ENCODE measurements at regions of chr7 and their contacts with region 1.

Region 1: DNA sequence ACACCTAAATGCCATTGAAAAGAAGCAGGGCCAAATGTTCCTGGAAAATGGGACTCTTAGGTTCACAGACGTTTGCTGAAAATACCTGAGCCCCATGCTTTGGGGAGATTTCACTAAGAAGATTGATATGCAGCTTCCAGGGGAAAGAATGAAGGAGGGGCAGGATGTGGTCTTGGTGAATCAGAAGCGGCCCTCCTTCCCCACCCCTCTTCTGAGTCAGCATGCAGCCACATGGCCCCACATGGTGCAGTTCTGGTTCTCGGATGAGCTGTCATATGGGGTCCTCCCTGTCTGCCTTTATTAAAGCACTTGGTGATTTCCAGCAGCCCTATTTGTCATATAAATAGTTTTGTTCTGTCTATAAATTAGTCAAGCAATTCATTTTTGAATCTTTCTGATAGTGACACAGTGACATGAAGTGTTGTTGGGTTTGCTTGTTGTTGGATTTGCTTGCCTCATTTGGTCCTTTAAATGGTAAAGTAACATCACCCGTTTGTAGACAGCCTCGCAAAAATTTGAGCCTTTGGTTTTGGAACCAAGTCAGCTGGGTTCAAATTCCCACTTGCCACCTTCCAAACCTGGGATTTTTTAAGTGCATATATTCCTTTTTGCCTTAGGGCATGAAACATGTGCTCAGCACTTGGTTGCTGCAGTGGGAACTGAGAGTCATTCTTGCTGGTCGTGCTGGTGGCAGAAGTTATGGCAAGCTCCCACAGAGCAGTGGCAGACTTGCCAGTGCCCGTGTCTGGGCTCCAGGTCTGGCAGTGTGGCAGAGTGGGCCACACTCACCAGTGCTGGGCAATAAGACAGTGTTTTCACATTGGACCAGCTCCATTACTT is 68.1 kb upstream of the CDK6 start:
- DNase-seq: peak; percentile 93
- H3K4me3 Mint-ChIP-seq: peak overlapping the region; percentile 53
- H3K27ac Mint-ChIP-seq: peak overlapping the region; percentile 94
- H3K4me1 Mint-ChIP-seq: peaks cover 21% of the 10 kb centered on the region
- H3K27me3 Mint-ChIP-seq: no peaks in the 10 kb centered on the region

Region 2: DNA sequence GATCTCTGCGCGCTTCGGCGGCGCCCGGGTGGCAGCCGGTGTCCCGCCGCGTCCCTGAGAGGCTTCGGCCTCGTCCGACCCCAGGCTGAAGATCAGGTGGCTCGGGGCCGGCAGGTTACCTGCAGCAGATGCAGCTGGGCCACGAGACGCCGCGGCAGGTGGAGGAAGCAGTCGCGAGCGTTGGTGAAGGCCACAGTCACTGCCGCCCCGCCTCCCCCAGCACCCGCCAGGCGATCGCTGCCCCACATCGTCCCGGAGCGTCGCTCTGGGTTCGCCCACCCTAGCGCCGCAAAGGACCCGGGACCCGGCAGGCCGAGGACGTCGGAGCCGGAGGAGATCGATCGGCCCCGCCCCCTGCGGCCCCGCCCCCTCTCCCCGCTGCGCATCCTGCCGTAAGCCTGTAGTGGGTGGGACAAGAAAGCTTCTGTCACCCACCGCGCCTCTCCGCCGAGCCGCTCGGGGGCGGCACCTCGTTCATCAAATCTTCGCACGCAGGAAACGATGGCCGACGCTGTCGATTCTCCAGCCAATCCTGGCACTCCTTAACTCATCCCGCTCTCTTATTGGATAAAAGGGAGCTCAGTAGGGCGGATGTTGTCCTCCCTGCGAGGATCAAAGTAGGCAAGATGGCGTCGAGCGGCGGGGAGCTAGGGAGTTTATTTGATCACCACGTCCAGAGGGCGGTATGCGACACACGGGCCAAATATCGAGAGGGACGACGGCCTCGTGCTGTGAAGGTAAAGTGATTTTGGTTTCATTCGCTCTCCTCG is 376.1 kb before region 1 on chr7 and contains the starts of genes PEX1 and RBM48:
- intact Hi-C with region 1: loop called (anchors 5 kb)
- DNase-seq: peak; percentile 98
- H3K4me3 Mint-ChIP-seq: peak within 1 kb of the TSS; percentile 98
- H3K27ac Mint-ChIP-seq: peak within 1 kb of the TSS; percentile 98
- H3K4me1 Mint-ChIP-seq: peaks cover 22% of the 10 kb centered on the region
- H3K27me3 Mint-ChIP-seq: peaks cover 2% of the 10 kb centered on the region
- total RNA-seq, gene PEX1: 14.4 and 14.8 TPM in 2 replicates
- total RNA-seq, gene RBM48: 14.4 and 17.3 TPM in 2 replicates

Region 3: DNA sequence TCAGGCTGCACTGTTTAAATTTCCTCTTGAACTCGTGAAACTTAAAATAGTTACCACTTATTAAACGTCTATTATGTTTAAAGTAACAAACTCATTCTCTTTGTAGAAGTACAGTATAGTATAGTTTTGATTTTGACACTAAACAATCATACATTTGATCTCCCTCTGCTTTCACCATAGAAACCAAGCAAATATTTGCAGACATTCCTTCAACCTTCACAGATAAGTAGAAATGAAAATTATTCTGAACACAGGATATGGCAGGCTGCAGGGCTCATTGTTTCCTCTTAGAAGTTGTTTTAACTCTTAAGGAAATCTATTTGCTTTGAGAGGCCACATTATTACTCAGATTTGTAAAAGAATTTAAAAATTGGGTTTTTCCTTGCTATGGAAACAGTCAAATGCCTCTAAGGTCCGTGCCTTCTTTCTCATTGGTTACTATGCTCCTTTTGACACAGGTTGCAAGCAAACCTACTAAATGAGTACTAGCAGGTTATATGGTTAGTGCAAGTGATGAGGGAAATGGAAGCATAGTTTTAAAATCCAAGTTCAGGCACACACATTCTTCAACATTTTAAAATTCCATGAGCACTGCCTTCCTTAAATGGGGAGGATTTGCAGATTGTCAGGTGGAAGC is 221.5 kb before region 1 on chr7:
- intact Hi-C with region 1: loop called (anchors 1 kb)
- DNase-seq: peak; percentile 75
- H3K4me3 Mint-ChIP-seq: peak overlapping the region; percentile 47
- H3K27ac Mint-ChIP-seq: peak overlapping the region; percentile 96
- H3K4me1 Mint-ChIP-seq: peaks cover 79% of the 10 kb centered on the region
- H3K27me3 Mint-ChIP-seq: no peaks in the 10 kb centered on the region

Region 4: DNA sequence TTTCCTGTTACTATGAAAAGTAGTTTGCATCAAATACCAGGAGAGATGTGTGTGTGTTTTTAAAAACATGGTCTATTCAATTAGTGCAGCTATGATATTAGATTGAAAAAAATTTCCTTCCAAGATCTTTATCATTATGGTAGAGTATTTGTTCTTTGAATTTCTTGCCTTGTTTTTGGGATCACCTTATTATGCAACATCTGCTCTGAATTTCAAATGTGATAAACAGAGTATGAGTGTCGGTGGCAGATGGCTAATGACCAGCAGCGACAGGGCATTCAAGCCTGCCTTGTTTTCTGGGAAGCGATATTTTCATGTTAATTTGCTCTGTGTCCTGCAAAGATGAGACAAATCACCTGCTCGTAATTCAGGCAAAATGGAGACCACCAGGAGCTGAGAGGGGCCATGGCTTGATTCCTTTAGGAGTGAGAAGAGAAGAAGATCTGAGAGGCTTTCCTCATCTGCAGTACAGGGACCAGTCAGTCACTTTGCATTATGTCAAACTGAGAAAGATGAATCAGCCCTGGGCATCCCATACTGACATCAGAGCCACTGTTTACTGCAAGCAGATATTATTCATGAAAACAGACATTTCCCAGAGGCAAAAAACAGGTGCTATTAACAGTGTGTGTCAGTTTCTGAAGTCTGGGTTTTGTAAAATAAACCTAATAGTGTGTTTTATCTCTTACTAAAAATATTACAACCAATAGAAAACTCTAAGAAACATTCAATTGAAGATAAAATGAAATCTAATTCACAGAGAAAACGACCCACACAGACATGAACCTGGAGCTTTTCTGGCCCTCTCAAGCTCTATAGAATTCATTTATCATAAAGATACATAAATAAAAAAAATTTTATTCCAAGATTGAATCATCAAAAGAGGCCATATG is 135.8 kb before region 1 on chr7:
- intact Hi-C with region 1: loop called (anchors 5 kb)
- DNase-seq: peak; percentile 66
- H3K4me3 Mint-ChIP-seq: peak overlapping the region; percentile 63
- H3K27ac Mint-ChIP-seq: peak overlapping the region; percentile 94
- H3K4me1 Mint-ChIP-seq: peaks cover 59% of the 10 kb centered on the region
- H3K27me3 Mint-ChIP-seq: no peaks in the 10 kb centered on the region

Region 5: GRCh38 chr7:92875719-92876118 is 28.8 kb before region 1 on chr7:
- intact Hi-C with region 1: loop called (anchors 1 kb)
- DNase-seq: peak; percentile 56
- H3K4me3 Mint-ChIP-seq: no peak overlapping the region
- H3K27ac Mint-ChIP-seq: peak overlapping the region; percentile 62
- H3K4me1 Mint-ChIP-seq: peaks cover 39% of the 10 kb centered on the region
- H3K27me3 Mint-ChIP-seq: no peaks in the 10 kb centered on the region

Region 6: DNA sequence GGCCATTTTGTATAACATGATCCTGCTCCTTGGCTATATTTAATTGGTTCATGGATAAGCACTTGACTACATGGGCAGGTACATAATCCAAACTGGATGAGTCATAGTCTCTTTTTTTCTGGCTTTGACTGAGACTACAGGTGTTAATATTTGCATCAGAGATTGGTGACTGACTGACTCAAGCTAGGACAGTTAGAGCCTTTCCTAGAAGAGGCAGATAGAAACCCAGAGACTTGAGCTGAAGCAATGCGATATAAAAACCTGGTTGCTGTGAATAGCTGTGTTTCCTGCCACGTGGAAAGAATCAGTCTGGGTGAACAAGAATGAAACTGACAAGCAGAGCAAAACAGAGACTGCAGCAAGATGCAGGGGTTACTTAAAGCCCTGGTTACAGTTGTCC is 132.3 kb after region 1 on chr7:
- intact Hi-C with region 1: loop called (anchors 1 kb)
- DNase-seq: peak; percentile 83
- H3K4me3 Mint-ChIP-seq: no peak overlapping the region
- H3K27ac Mint-ChIP-seq: peak overlapping the region; percentile 74
- H3K4me1 Mint-ChIP-seq: peaks cover 26% of the 10 kb centered on the region
- H3K27me3 Mint-ChIP-seq: no peaks in the 10 kb centered on the region

Measured in activated CD4-positive, alpha-beta T cell treated with anti-CD3 and anti-CD28 coated beads, Interleukin-2, amount 10 ng/mL, durations not matched to agents 24 days and 14 days (primary cell).